Posterior cingulate gyrus (tissue), 11 donors: ENCODE measurements at regions of chr12 and their contacts with region 1.

Region 1: DNA sequence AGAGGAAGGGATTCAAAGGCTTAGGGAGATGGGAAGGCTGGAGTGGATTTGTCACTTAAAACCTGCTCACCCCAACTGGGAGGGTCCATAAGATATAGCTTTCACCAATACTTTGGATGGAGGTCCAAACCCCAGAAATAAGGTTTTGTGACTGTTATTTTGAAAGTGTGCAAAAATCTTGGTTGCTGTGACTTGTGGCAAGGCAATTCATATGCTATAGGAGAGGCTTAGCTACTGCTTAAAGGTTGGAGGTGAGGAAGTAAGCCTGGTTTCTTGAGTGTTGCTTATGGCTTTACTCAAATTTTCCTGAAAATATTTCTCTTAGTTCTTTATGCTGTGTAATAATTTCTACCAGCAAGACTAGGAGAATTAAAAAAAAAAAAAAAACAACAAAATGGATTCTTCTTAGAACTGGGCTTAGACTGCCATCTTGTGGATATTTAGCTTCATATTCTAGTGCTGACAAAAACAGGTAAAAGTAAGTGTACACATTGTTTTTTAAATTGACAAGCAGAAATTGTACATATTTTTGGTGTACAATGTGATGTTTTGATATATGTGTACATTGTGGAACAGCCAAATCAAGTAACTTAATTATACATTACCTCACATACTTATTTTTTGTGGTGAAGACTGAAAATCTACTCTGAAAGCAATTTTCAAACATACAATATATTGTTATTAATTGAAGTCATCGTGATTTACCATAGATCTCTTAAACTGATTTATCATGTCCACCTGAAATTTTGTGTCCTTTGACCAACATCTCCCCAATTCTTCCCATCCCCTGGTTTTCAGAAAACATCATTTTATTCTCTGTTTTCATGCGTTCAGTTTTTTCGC is 23.0 kb downstream of the PDE6H start:
- DNase-seq: no peak

Region 2: DNA sequence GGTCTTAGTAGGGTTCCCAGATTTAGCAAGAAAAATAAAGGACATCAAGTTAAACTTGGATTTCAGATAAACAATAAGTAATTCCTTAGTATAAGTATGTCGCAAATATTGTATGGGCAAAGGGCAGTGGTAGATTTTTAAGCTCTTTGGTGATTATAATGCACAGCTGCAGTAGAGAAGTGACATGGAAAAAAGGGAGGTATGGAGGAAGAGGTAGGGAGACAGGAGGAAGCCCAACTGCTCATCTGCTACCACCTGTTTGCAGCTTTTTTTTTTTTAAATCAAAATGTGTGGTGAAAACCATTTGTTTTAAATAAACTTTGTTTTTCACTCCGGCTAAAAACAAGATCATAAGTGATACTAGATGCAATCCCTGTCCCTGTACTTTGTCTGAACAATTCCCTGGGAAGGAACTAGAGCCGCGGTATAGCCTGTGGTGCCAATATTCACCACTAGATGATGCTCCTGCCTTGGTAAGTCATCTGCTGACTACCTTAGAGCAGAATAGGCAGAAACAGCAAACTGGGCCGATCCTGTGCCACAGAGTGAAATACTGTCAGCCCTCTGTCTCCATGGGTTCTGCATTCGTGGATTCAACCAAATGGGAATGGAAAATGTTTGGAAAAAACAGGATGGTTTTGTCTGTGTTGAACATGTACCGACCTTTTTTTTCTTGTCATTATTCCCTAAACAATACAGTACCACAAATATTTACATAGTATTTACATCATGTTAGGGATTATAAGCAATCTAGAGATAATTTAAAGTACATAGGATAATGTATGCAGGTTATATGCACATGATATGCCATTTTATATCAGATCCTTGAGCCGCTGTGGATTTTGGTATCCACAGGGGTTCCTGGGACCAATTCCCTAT is 365.7 kb before region 1 on chr12:
- intact Hi-C with region 1: loop called (anchors 10 kb)
- DNase-seq: peak in 8 of 10 donors; percentile 55 to 91 (median 68)

Region 3: GRCh38 chr12:14723763-14724162 is 272.0 kb before region 1 on chr12:
- intact Hi-C with region 1: loop called (anchors 5 kb)
- DNase-seq: peak in 2 of 10 donors; percentile 47 to 77

Region 4: GRCh38 chr12:14845350-14845750 is 150.5 kb before region 1 on chr12:
- intact Hi-C with region 1: loop called (anchors 1 kb)
- DNase-seq: peak in 3 of 10 donors; percentile 24 to 40 (median 31)

Region 5: DNA sequence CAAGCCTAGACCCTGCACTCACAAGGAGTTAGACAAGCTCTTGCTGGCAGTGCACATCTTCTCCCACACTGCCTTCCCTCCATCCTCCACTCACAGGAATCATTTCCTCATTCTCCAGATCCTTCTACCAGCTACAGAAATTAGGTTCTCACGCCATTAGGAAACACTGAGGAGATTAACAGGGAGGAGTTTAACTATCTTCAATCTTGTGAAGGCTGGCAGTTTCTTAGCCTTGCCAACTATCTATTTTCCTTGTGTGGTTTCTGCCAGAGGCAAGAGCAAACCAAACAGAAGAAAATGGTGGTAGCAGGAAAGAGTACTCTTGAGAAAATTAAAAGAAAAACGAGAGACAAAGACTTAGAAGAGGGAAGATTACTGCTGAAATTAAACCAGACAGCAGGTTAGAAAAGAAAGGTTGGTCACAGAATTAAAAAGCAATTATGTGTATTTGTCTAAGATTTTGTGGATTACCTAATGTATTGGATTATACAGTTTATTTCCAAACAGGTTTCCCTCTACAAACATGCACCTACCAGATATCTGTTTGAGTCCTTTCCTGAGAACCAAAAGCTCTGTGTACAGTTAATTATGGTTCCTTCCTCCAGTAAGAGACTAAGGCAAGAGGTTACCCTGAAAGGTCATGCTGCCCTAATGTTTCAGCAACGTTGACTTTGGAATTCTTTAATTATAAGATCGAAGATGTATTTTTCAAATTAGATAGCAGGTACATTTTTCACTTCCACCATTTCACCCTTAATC is 220.4 kb after region 1 on chr12:
- intact Hi-C with region 1: loop called (anchors 5 kb)
- DNase-seq: no peak

Region 6: GRCh38 chr12:15856097-15856982 is 860.5 kb after region 1 on chr12:
- intact Hi-C with region 1: no loop called
- DNase-seq: peak in 2 of 10 donors; percentile 18 to 50